PC-9 (cell line): ENCODE measurements at regions of chr18 and their contacts with region 1.

Region 1: DNA sequence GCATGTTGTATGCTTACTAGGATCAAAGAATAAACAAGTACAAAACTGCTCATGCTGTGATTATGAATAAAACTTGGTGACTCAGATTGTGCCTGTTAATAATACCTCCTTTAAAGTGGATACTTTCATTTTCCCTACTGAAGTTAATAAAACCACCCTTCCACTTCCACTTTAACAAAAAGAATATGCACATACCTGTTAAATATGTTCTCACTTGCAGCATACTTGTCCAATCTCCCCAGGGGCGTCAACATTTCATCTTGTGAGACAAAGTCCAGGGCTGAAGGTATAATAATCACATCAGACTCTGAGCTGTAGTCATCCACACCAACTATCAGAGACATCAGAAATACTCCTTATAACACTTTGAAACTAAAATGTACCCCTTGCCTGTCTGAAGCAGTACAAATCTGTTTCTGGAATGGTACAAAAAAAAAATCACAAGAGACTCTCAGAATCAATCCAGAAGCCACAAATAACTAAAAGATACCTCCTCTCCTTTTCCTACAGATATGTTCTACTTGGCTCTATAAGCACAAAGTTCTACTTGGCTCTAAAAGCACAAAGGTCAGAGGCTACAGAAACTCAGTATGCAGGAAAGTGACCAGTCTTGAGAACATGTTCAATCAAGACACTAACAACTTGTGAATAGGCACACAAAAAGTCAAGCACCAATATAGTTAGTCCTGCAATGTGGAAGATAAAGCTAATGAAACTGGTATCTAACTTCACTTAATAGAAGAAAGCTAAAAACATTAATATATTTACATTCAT is 19.3 kb downstream of the PPP4R1 start:
- DNase-seq: no peak
- H3K4me3 ChIP-seq: no peak overlapping the region
- H3K27ac ChIP-seq: peak overlapping the region; percentile 31; the same call in 1 of the 2 replicates
- H3K4me1 ChIP-seq: no peaks in the 10 kb centered on the region
- H3K27me3 ChIP-seq: no peaks in the 10 kb centered on the region
- CTCF ChIP-seq: no peak

Region 2: DNA sequence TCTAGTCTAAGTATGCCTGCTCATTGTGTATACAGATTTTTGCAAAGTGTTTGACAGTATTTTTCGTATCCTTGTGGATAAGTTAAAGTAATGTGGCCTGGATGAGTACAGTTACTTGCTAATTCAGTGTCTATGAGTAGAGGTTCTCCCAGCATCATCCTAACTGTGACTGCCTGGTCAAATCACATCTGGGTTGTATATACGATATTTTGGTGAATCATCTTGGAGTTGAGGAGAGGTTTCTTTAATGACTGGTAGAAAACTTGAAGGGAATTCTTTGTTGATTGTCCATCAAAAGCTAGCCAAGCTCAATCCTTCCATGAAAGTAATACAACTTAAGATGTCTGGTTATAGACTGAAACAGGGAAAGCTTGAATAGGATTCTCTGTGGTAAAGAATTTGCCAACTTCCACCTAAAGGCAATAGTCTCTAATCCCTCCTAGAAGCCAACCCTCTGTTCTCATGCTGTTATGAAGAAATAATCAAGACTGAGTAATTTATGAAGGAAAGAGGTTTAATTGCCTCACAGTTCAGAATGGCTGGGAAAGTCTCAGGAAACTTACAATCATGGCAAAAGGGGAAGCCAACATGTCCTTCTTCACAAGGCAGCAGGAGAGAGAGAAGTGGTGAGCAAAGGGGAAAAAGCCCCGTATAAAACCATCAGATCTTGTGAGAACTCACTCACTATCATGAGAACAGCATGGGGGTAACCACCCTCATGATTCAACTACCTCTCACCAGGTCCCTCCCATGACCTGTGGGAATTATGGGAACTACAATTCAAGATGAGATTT is 139.1 kb before region 1 on chr18:
- CTCF ChIA-PET with region 1: interaction called, 12 read pairs
- POLR2A ChIA-PET with region 1: no interaction called
- intact Hi-C with region 1: no loop called
- DNase-seq: no peak
- H3K4me3 ChIP-seq: no peak overlapping the region
- H3K27ac ChIP-seq: no peak overlapping the region
- H3K4me1 ChIP-seq: no peaks in the 10 kb centered on the region
- H3K27me3 ChIP-seq: no peaks in the 10 kb centered on the region
- CTCF ChIP-seq: no peak